ENCODE measurements at regions of chr2 and their contacts with region 1.

Region 1: GRCh38 chr2:84946204-84947009 is 24.6 kb upstream of the KCMF1 start:
- DNase-seq: peak; percentile 77
- ATAC-seq: peak; percentile 93
- H3K4me3 Mint-ChIP-seq: peak overlapping the region; percentile 47
- H3K27ac Mint-ChIP-seq: peak overlapping the region; percentile 89
- H3K4me1 Mint-ChIP-seq: peaks cover 48% of the 10 kb centered on the region
- H3K27me3 Mint-ChIP-seq: no peaks in the 10 kb centered on the region

Region 2: GRCh38 chr2:84888401-84889276 is 57.8 kb before region 1 on chr2:
- CTCF ChIA-PET with region 1: interaction called, 13 read pairs
- POLR2A ChIA-PET with region 1: interaction called, 6 read pairs
- DNase-seq: peak; percentile 81
- ATAC-seq: peak; percentile 96
- H3K4me3 Mint-ChIP-seq: peak overlapping the region; percentile 70
- H3K27ac Mint-ChIP-seq: peak overlapping the region; percentile 92
- H3K4me1 Mint-ChIP-seq: peaks cover 70% of the 10 kb centered on the region
- H3K27me3 Mint-ChIP-seq: no peaks in the 10 kb centered on the region

Region 3: DNA sequence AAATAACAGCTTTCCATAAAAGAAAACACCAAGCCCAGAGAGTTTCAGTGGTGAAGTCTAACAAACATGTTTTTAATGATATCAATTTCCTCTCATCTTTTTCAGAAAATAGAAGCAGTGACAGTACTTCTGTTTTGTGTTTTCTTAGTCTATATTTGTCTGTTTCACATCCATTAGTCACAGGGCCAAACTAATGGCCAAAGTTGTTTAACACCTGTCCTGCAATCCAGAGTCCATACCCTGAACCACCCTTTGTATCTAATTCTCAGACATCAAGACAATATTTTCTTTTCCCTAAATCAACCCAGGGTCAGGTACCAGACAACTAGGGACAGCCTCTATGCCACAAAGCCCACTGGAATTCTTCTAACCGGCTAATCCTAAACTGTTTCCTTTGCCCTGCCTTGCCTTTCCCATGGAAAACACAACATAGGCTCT is 15.0 kb before region 1 on chr2:
- CTCF ChIA-PET with region 1: interaction called, 270 read pairs
- POLR2A ChIA-PET with region 1: interaction called, 15 read pairs
- DNase-seq: no peak
- ATAC-seq: no peak
- H3K4me3 Mint-ChIP-seq: no peak overlapping the region
- H3K27ac Mint-ChIP-seq: peak overlapping the region; percentile 57
- H3K4me1 Mint-ChIP-seq: peaks cover 42% of the 10 kb centered on the region
- H3K27me3 Mint-ChIP-seq: no peaks in the 10 kb centered on the region

Region 4: GRCh38 chr2:85017411-85018048 is 71.1 kb after region 1 on chr2:
- CTCF ChIA-PET with region 1: interaction called, 16 read pairs
- POLR2A ChIA-PET with region 1: no interaction called
- DNase-seq: no peak
- ATAC-seq: no peak
- H3K4me3 Mint-ChIP-seq: no peak overlapping the region
- H3K27ac Mint-ChIP-seq: no peak overlapping the region
- H3K4me1 Mint-ChIP-seq: peaks cover 49% of the 10 kb centered on the region
- H3K27me3 Mint-ChIP-seq: no peaks in the 10 kb centered on the region